A549 (cell line): ENCODE measurements at regions of chr19 and their contacts with region 1.

Region 1: DNA sequence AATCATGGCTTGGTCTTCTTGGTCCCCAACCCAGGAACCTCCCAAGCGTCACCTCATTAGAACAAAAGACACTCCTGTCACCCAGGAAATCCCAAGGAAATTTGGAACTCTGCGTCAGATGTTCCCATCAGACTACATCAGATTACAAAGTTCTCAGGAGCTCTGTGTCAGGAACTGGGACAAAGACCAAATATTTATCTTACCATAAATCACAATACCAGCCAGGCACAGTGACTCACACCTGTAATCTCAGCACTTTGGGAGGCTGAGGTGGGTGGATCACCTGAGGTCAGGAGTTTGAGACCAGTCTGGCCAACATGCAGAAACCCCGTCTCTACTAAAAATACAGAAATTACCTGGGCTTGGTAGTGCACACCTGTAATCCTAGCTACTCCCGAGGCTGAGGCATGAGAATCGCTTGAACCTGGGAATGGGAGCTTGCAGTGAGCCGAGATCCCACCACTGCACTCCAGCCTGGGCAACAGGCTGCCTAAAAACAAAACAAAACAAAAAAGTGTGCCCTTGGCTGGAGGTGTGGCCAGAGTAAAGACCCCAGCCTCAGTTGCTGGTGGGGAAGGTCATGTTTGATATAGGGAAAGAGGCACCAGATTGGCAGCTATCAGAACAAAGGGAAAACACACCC is 16.7 kb upstream of the CCDC124 start:
- DNase-seq: peak; percentile 36 to 73
- ATAC-seq: peak in 1 of 2 experiments; percentile 76; a peak in 4 of 6 replicates
- H3K4me3 ChIP-seq: no peak overlapping the region
- H3K27ac ChIP-seq: peak overlapping the region; percentile 42 to 60; a peak in 3 of 6 replicates
- H3K4me1 ChIP-seq: peaks cover 17% of the 10 kb centered on the region
- CTCF ChIP-seq: no peak
- EP300 ChIP-seq: no peak
- POLR2A ChIP-seq: no peak
- RAD21 ChIP-seq: no peak

Region 2: DNA sequence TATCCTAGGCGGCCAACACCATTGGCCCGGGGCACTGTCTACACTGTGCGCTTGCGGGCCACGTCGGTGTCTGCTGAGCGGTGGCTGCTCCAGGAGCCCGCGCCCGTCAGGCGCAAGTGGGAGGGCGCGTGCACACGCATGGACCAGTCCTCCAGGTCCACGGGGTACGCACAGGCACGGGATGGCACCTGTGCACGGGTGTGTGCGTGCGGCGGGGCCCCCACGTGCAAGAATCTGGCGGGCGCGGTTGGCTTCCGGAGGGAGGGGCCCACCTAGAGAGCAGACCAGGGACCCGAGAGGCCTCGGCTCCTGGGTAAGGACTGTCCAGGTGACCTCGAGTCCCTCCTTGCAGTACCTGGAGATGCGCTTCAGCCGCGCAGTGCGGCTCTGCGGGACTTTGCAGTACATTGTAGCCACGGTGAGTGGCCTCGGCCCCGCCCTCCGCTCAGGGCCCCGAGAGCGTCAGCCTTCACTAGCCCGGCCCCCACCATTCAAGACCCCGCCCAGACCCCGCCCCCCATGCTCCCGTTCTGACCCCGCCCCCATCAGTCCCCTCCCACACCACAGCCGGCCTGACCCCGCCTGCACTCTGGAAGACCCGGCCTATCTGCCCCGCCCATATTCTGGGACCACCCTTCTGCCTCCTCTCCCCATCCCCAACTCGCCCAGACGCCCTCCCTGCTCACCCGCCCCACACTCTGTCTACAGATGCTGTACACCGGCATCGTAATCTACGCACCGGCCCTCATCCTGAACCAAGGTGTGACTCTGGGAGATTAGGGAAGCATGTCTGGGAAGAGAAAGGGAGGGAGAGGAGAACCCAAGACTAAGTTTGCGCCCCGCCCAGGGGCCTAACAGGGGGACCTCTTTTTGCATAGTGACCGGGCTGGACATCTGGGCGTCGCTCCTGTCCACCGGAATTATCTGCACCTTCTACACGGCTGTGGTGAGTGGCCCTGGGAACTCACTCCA is 42.0 kb before region 1 on chr19:
- CTCF ChIA-PET with region 1: interaction called, 20 read pairs
- POLR2A ChIA-PET with region 1: no interaction called
- DNase-seq: peak; percentile 49 to 69
- ATAC-seq: peak; percentile 74 to 81
- H3K4me3 ChIP-seq: peak overlapping the region; percentile 52
- H3K27ac ChIP-seq: peak overlapping the region; percentile 65 to 80
- H3K4me1 ChIP-seq: no peaks in the 10 kb centered on the region
- CTCF ChIP-seq: no peak
- EP300 ChIP-seq: no peak
- POLR2A ChIP-seq: 0 out of 2 replicates have a peak, but pooled peaks have one; percentile 19
- RAD21 ChIP-seq: no peak